Heart left ventricle (tissue), 16 donors: ENCODE measurements at regions of chr15 and their contacts with region 1.

Region 1: GRCh38 chr15:66851226-66852071 is 149.4 kb downstream of the SMAD6 start:
- DNase-seq: peak; percentile 86 to 93 (median 90)
- ATAC-seq: peak; percentile 78 to 93 (median 91)
- H3K4me3 ChIP-seq: peak overlapping the region in 5 of 12 donors; percentile 3 to 33 (median 19)
- H3K27ac ChIP-seq: peak overlapping the region in 11 of 12 donors; percentile 68 to 87 (median 82)
- H3K4me1 ChIP-seq: peaks cover 0 to 36% (median 27%) of the 10 kb centered on the region in 12 donors
- H3K27me3 ChIP-seq: no peaks in the 10 kb centered on the region
- CTCF ChIP-seq: peak; percentile 95 to 99 (median 98)
- POLR2A ChIP-seq: no peak

Region 2: GRCh38 chr15:66504563-66505429 is 346.7 kb before region 1 on chr15 and contains the starts of genes RPL4 and ZWILCH:
- intact Hi-C with region 1: loop called in 1 of 10 experiments (anchors 5 kb)
- DNase-seq: peak; percentile 82 to 88 (median 83)
- ATAC-seq: peak; percentile 94 to 96 (median 94)
- H3K4me3 ChIP-seq: peak within 1 kb of the TSS; percentile 47 to 96 (median 86)
- H3K27ac ChIP-seq: peak within 1 kb of the TSS; percentile 82 to 97 (median 91)
- H3K4me1 ChIP-seq: peaks cover 7 to 42% (median 22%) of the 10 kb centered on the region in 12 donors
- H3K27me3 ChIP-seq: no peaks in the 10 kb centered on the region
- CTCF ChIP-seq: peak in 1 of 12 donors; percentile 16
- POLR2A ChIP-seq: peak; percentile 42 to 84
- total RNA-seq, gene RPL4: 1,009 to 1,685 (median 1,364) TPM
- total RNA-seq, gene ZWILCH: 1.8 to 5.4 (median 2.6) TPM

Region 3: DNA sequence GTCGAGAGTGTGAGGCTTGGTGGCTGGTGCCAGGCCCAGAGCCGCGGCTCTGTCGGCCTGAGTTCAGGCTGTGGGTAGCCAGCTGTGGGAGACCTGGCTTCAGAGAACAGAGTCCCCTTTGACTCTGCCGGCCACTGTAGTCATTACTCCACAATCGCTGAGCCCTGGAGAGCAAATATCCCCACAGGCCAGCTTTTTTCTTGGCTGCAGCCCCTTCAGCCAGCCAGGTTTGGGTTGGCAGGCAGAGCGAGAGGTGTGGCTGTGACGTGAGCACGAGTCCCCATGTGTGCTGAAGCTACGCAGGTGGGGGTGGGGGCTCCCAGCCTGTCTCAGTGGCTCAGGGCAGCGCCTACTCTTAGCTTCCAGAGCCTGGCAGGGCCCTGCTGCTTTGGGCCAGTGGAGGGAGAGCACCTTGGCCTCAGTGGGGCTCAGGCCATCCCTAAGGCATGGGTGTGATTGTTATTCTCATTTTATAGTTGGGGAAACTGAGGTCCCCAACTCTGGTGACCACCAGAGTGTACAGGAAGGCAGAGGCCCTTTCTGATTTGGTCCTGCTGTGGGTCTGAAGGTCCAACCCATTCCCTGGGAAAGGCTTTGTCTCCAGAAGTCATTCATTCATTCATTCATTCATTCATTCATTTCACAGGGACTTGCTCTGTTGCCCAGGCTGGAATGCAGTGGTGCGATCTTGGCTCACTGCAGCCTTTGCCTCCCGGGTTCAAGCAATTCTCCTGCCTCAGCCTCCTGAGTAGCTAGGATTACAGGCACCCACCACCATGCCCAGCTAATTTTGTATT is 240.0 kb before region 1 on chr15:
- intact Hi-C with region 1: loop called in 7 of 10 experiments (anchors 5 kb)
- DNase-seq: no peak
- ATAC-seq: peak in 1 of 4 donors; percentile 60
- H3K4me3 ChIP-seq: no peak overlapping the region
- H3K27ac ChIP-seq: no peak overlapping the region
- H3K4me1 ChIP-seq: peaks cover 0 to 32% (median 5%) of the 10 kb centered on the region in 12 donors
- H3K27me3 ChIP-seq: no peaks in the 10 kb centered on the region
- CTCF ChIP-seq: no peak
- POLR2A ChIP-seq: no peak

Region 4: GRCh38 chr15:66707310-66708082 is 144.0 kb before region 1 on chr15:
- intact Hi-C with region 1: loop called in 7 of 10 experiments (anchors 2 to 10 kb)
- DNase-seq: peak in 4 of 5 donors; percentile 39 to 66 (median 55)
- ATAC-seq: peak; percentile 9 to 59 (median 44)
- H3K4me3 ChIP-seq: peak overlapping the region in 10 of 12 donors; percentile 10 to 90 (median 68)
- H3K27ac ChIP-seq: peak overlapping the region in 11 of 12 donors; percentile 19 to 95 (median 81)
- H3K4me1 ChIP-seq: peaks cover 0 to 65% (median 37%) of the 10 kb centered on the region in 12 donors
- H3K27me3 ChIP-seq: peaks cover 0 to 25% (median 0%) of the 10 kb centered on the region in 9 donors
- CTCF ChIP-seq: peak in 5 of 12 donors; percentile 15 to 32 (median 25)
- POLR2A ChIP-seq: no peak

Region 5: DNA sequence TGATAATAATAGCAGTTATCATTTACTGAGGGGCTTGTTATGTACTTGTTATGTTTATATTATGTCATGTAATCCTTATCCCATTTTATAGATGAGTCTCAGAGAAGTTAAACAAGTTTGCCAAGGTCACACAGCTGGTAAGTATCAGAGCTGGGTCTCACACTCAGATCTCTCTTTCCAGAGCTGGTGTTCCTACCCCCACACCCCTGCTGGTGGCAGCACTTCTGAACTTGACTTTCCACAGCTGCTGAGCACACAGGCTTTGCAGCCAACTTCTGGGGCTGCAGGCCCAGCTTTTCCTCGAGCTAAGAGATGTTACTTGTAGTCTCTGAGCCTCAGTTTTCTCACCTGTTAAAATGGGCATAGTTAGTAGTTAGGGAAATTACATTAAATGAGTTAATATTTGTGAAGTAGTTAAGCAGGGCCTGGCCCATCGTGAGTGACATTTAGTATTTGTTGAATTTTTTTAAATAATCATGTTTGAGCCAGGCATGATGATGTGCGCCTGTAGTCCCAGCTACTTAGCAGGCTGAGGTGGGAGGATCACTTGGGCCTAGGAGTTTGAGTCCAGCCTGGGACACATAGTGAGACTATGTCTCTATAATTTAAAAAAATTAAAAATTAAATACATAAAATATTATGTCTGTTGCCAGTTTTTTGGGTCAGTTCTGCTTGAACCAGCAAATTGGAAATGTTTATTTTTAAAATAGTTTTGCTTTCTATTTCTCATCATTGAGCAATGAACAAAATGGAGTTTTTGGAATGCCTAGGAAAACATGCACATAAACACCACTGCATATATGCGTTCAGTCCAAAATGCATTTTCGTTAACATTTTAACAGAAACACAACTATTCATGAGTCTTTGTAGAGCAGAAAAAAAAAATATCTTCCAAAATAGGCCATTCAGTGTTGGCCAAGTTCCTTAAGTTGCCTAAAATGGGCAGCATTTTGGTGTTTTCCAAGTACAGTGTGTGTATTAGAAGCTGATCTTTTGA is 62.1 kb before region 1 on chr15:
- intact Hi-C with region 1: loop called in 3 of 10 experiments (anchors 1 to 5 kb)
- DNase-seq: peak in 2 of 5 donors; percentile 60 to 66
- ATAC-seq: peak in 3 of 4 donors; percentile 71 to 79 (median 73)
- H3K4me3 ChIP-seq: no peak overlapping the region
- H3K27ac ChIP-seq: no peak overlapping the region
- H3K4me1 ChIP-seq: peaks cover 0 to 13% (median 0%) of the 10 kb centered on the region in 12 donors
- H3K27me3 ChIP-seq: no peaks in the 10 kb centered on the region
- CTCF ChIP-seq: peak; percentile 24 to 57 (median 40)
- POLR2A ChIP-seq: no peak

Region 6: GRCh38 chr15:67125589-67126502 is 274.4 kb after region 1 on chr15:
- intact Hi-C with region 1: no loop called
- DNase-seq: peak; percentile 74 to 91 (median 85)
- ATAC-seq: peak; percentile 56 to 81 (median 77)
- H3K4me3 ChIP-seq: peak overlapping the region in 6 of 12 donors; percentile 1 to 37 (median 18)
- H3K27ac ChIP-seq: peak overlapping the region; percentile 5 to 93 (median 72)
- H3K4me1 ChIP-seq: peaks cover 2 to 96% (median 53%) of the 10 kb centered on the region in 12 donors
- H3K27me3 ChIP-seq: no peaks in the 10 kb centered on the region
- CTCF ChIP-seq: no peak
- POLR2A ChIP-seq: no peak

Region 7: GRCh38 chr15:67746022-67746421 is 894.6 kb after region 1 on chr15:
- intact Hi-C with region 1: no loop called
- DNase-seq: no peak
- ATAC-seq: no peak
- H3K4me3 ChIP-seq: no peak overlapping the region
- H3K27ac ChIP-seq: no peak overlapping the region
- H3K4me1 ChIP-seq: peaks cover 0 to 32% (median 0%) of the 10 kb centered on the region in 12 donors
- H3K27me3 ChIP-seq: no peaks in the 10 kb centered on the region
- CTCF ChIP-seq: no peak
- POLR2A ChIP-seq: no peak